ENCODE measurements at regions of chr12 and their contacts with region 1.

Region 1: DNA sequence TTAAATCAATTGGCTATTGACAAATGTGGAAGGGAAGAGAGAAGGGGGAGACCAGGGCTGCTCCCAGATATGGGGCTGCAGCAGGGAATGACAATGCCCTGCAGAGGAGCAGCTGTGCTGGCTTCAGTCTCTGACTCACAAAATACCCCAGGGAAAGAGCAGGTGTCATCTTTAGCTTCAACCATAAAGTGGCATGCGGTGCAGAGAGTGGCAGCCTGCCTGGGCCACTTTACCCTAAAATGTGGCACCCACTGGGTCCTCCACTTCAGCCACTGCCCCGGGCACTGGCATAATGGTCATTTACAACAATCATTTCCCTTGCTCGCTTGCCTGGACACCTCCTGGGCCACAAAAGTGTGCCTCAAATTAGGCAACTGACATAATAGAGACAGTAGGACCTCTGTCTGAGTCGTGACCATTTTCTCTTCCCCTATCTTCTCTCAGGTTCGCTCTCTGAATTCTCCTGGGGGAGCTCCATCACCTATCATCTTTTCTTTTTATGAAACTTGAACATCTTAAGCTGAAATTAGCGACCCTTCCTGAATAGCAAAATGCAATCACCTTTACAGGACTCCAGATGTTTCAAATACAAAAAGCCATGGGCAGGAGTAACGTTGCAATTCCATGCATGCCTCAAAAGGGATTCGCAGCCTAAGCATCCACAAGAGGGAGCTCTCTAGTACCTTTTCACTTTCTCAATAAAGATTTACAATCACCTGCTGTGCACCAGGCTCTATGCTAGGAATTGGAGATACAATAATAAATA is 179.9 kb upstream of the ATF7IP start:
- DNase-seq: no peak
- H3K4me3 ChIP-seq: no peak overlapping the region
- CTCF ChIP-seq: peak; percentile 63

Region 2: GRCh38 chr12:14111230-14111865 is 74.3 kb before region 1 on chr12:
- CTCF ChIA-PET with region 1: no interaction called
- POLR2A ChIA-PET with region 1: no interaction called
- DNase-seq: no peak
- H3K4me3 ChIP-seq: no peak overlapping the region
- CTCF ChIP-seq: no peak

Region 3: GRCh38 chr12:14175206-14175605 is 10.4 kb before region 1 on chr12:
- CTCF ChIA-PET with region 1: interaction called, 19 read pairs
- POLR2A ChIA-PET with region 1: no interaction called
- DNase-seq: no peak
- H3K4me3 ChIP-seq: no peak overlapping the region
- CTCF ChIP-seq: no peak

Region 4: DNA sequence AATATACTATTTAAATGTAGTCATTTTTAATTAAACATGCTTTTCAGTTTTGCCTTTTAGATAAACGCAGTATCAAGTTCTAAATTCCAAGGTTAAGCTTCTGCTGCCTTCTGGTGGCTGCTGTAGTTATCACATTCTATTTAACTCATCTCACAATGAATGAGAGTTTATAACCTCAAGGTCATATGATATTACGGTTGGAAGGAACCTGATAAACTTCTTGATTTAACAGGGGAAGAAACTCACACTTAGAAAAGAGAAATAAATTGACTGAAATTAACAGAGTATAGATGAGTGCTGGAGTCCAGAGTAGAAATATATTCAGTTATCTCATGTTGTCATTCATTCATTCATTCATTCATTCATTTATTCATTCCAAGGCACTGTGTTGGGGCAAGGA is 478.9 kb after region 1 on chr12:
- CTCF ChIA-PET with region 1: interaction called, 10 read pairs
- POLR2A ChIA-PET with region 1: no interaction called
- DNase-seq: no peak
- H3K4me3 ChIP-seq: no peak overlapping the region
- CTCF ChIP-seq: peak; percentile 15